ENCODE measurements at regions of chr6 and their contacts with region 1.

Region 1: GRCh38 chr6:25717866-25718740 is 36.4 kb upstream of the SLC17A4 start:
- DNase-seq: no peak
- H3K4me3 ChIP-seq: no peak overlapping the region
- H3K27ac ChIP-seq: no peak overlapping the region
- H3K4me1 ChIP-seq: no peaks in the 10 kb centered on the region
- H3K27me3 ChIP-seq: no peaks in the 10 kb centered on the region
- CTCF ChIP-seq: peak; percentile 47 to 57

Region 2: DNA sequence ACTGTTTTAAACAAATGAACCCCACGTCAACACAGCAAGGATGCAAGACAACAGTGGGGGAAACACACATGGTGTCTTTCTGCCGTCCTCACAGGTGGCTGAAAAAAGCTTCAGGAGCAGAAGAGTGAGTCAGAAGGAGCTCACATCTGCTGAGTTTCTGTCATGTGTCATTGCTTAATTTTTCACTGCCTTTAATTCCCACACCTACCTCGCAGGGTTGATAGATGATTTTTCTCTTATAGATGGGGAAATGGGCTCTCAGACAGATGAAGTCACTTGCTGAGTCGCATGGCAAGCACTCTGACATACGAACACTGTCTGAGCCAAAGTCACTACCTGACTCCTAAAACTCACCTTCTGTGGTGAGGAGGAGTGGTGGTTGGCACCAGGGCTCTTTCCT is 467.2 kb before region 1 on chr6:
- CTCF ChIA-PET with region 1: interaction called, 10 read pairs
- dilution Hi-C with region 1: no loop called
- in situ Hi-C with region 1: no loop called
- intact Hi-C with region 1: no loop called
- DNase-seq: peak; percentile 97
- H3K4me3 ChIP-seq: no peak overlapping the region
- H3K27ac ChIP-seq: peak overlapping the region; percentile 39
- H3K4me1 ChIP-seq: peaks cover 5% of the 10 kb centered on the region
- H3K27me3 ChIP-seq: no peaks in the 10 kb centered on the region
- CTCF ChIP-seq: no peak

Region 3: DNA sequence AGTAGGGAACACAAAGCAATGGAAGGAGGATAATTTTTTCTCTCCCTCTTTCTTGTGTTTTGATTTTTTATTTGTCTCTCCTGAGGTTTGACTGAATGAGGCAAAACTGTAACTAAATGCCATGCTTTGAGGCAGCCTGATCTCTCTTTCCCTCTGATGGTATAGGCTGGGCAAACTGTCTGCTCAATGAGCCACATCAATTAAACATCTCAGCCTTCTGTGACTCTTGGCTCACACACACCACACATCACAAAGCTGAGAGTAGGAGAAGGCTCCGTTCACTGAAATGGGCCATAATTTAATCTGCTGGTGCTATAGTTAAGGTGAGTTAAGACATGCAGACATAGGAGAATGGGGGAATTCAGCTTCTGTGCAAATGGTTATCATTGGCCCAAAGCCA is 94.2 kb before region 1 on chr6:
- CTCF ChIA-PET with region 1: no interaction called
- dilution Hi-C with region 1: loop called (anchors 5 kb)
- in situ Hi-C with region 1: no loop called
- intact Hi-C with region 1: no loop called
- DNase-seq: no peak
- H3K4me3 ChIP-seq: no peak overlapping the region
- H3K27ac ChIP-seq: no peak overlapping the region
- H3K4me1 ChIP-seq: no peaks in the 10 kb centered on the region
- H3K27me3 ChIP-seq: no peaks in the 10 kb centered on the region
- CTCF ChIP-seq: no peak

Region 4: GRCh38 chr6:25889877-25890853 is 172.1 kb after region 1 on chr6:
- CTCF ChIA-PET with region 1: no interaction called
- dilution Hi-C with region 1: no loop called
- in situ Hi-C with region 1: no loop called
- intact Hi-C with region 1: loop called (anchors 1 kb)
- DNase-seq: peak; percentile 40
- H3K4me3 ChIP-seq: no peak overlapping the region
- H3K27ac ChIP-seq: no peak overlapping the region
- H3K4me1 ChIP-seq: no peaks in the 10 kb centered on the region
- H3K27me3 ChIP-seq: no peaks in the 10 kb centered on the region
- CTCF ChIP-seq: peak; percentile 22 to 61

Region 5: GRCh38 chr6:26003102-26003694 is 285.1 kb after region 1 on chr6:
- CTCF ChIA-PET with region 1: no interaction called
- dilution Hi-C with region 1: no loop called
- in situ Hi-C with region 1: no loop called
- intact Hi-C with region 1: loop called (anchors 2 kb)
- DNase-seq: peak; percentile 33
- H3K4me3 ChIP-seq: no peak overlapping the region
- H3K27ac ChIP-seq: no peak overlapping the region
- H3K4me1 ChIP-seq: peaks cover 5% of the 10 kb centered on the region
- H3K27me3 ChIP-seq: no peaks in the 10 kb centered on the region
- CTCF ChIP-seq: peak; percentile 71 to 81